Naive thymus-derived CD4-positive, alpha-beta T cell (primary cell): ENCODE measurements at regions of chr19 and their contacts with region 1.

Region 1: GRCh38 chr19:48954595-48955310 is at the start of gene BAX:
- DNase-seq: peak; percentile 59 to 96 (median 71)
- ATAC-seq: peak; percentile 92
- H3K4me3 ChIP-seq: peak within 1 kb of the TSS; percentile 65
- H3K4me3 Mint-ChIP-seq: peak within 1 kb of the TSS; percentile 88 to 95 (median 94)
- H3K27ac ChIP-seq: peak within 1 kb of the TSS; percentile 85
- H3K27ac Mint-ChIP-seq: peak within 1 kb of the TSS; percentile 77 to 94 (median 91)
- H3K4me1 ChIP-seq: peaks cover 12 to 19% of the 10 kb centered on the region in 2 donors
- H3K4me1 Mint-ChIP-seq: peaks cover 26 to 46% (median 38%) of the 10 kb centered on the region in 7 donors
- H3K27me3 ChIP-seq: no peaks in the 10 kb centered on the region
- H3K27me3 Mint-ChIP-seq: peaks cover 0 to 2% (median 0%) of the 10 kb centered on the region in 5 donors
- total RNA-seq, gene BAX: 78.7 to 355 (median 122) TPM

Region 2: GRCh38 chr19:48933382-48933932 is 21.3 kb before region 1 on chr19 and contains the start of gene DHDH:
- CTCF ChIA-PET with region 1: no interaction called
- POLR2A ChIA-PET with region 1: interaction called, 6 read pairs
- intact Hi-C with region 1: loop called (anchors 1 to 2 kb)
- DNase-seq: peak; percentile 75 to 90 (median 87)
- ATAC-seq: peak; percentile 98
- H3K4me3 ChIP-seq: peak within 1 kb of the TSS; percentile 50
- H3K4me3 Mint-ChIP-seq: peak within 1 kb of the TSS; percentile 78 to 91 (median 86)
- H3K27ac ChIP-seq: peak within 1 kb of the TSS; percentile 57
- H3K27ac Mint-ChIP-seq: peak within 1 kb of the TSS; percentile 66 to 94 (median 91)
- H3K4me1 ChIP-seq: peaks cover 6 to 7% of the 10 kb centered on the region in 2 donors
- H3K4me1 Mint-ChIP-seq: peaks cover 7 to 17% (median 14%) of the 10 kb centered on the region in 7 donors
- H3K27me3 ChIP-seq: no peaks in the 10 kb centered on the region
- H3K27me3 Mint-ChIP-seq: peaks cover 0 to 16% (median 0%) of the 10 kb centered on the region in 5 donors
- total RNA-seq, gene DHDH: 1.1 to 1.7 (median 1.3) TPM